Activated CD4-positive, alpha-beta T cell treated with anti-CD3 and anti-CD28 coated beads for 36 hours (primary cell): ENCODE measurements at regions of chr1 and their contacts with region 1.

Region 1: GRCh38 chr1:44786138-44786840 is 1.7 kb downstream of the BEST4 start:
- DNase-seq: peak; percentile 85
- ATAC-seq: peak; percentile 73
- H3K4me3 Mint-ChIP-seq: peak overlapping the region; percentile 66
- H3K27ac Mint-ChIP-seq: peak overlapping the region; percentile 69
- H3K4me1 Mint-ChIP-seq: peaks cover 31% of the 10 kb centered on the region
- H3K27me3 Mint-ChIP-seq: no peaks in the 10 kb centered on the region

Region 2: DNA sequence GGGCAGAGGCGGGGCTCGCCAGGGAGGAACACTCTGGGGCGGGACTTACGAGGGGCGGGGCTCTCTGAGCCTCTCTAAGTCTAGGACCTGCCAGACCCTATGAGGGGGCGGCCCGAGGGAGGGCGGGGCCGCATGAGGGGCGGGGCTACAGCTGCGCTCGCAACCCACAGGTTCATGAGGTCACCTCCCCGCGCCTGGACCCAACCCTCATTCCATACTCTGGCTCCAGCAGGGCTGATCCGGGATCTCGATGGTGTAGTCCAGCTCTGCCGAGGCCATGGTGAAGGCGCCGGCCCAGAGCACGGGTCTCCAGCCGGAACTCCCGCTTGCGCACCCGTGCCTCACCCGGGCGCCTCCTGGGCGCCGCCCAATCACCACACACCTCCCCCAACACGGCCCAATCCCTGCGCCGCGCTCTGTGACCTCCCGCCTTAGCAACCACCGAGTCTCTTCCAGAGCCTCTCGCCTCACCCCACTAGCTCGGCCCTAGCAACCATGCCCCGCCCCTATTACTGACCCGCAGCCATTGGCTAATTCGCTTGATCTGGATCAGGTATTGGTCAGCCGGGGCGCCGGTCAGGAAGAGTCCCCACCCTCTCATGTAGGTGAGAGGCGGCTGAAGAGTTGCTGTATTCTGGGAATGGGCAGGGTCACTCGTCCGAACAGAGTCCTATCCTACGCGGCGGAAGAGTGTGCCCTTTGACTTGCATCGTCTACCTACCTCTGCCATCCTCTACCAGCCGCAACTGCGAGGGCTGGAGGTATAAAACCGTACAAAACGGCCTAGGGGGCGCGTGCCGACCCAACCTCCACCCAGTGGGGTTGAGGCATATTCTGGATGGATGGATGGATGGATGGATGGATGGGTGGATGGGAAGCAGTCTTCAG is 111.9 kb before region 1 on chr1 and contains the starts of genes ARMH1 and TMEM53:
- CTCF ChIA-PET with region 1: no interaction called
- POLR2A ChIA-PET with region 1: no interaction called
- intact Hi-C with region 1: no loop called
- DNase-seq: peak; percentile 99
- ATAC-seq: peak; percentile 97
- H3K4me3 Mint-ChIP-seq: peak within 1 kb of the TSS; percentile 78
- H3K27ac Mint-ChIP-seq: peak within 1 kb of the TSS; percentile 84
- H3K4me1 Mint-ChIP-seq: peaks cover 24% of the 10 kb centered on the region
- H3K27me3 Mint-ChIP-seq: no peaks in the 10 kb centered on the region
- total RNA-seq, gene ARMH1: 67.3 to 75.1 TPM
- total RNA-seq, gene TMEM53: 4.3 to 5.5 TPM

Region 3: GRCh38 chr1:44819608-44820327 is 33.5 kb after region 1 on chr1:
- CTCF ChIA-PET with region 1: interaction called, 6 read pairs
- POLR2A ChIA-PET with region 1: interaction called, 29 read pairs
- intact Hi-C with region 1: loop called (anchors 1 kb)
- DNase-seq: peak; percentile 88
- ATAC-seq: peak; percentile 88
- H3K4me3 Mint-ChIP-seq: peak overlapping the region; percentile 85
- H3K27ac Mint-ChIP-seq: peak overlapping the region; percentile 100
- H3K4me1 Mint-ChIP-seq: peaks cover 37% of the 10 kb centered on the region
- H3K27me3 Mint-ChIP-seq: no peaks in the 10 kb centered on the region

Region 4: DNA sequence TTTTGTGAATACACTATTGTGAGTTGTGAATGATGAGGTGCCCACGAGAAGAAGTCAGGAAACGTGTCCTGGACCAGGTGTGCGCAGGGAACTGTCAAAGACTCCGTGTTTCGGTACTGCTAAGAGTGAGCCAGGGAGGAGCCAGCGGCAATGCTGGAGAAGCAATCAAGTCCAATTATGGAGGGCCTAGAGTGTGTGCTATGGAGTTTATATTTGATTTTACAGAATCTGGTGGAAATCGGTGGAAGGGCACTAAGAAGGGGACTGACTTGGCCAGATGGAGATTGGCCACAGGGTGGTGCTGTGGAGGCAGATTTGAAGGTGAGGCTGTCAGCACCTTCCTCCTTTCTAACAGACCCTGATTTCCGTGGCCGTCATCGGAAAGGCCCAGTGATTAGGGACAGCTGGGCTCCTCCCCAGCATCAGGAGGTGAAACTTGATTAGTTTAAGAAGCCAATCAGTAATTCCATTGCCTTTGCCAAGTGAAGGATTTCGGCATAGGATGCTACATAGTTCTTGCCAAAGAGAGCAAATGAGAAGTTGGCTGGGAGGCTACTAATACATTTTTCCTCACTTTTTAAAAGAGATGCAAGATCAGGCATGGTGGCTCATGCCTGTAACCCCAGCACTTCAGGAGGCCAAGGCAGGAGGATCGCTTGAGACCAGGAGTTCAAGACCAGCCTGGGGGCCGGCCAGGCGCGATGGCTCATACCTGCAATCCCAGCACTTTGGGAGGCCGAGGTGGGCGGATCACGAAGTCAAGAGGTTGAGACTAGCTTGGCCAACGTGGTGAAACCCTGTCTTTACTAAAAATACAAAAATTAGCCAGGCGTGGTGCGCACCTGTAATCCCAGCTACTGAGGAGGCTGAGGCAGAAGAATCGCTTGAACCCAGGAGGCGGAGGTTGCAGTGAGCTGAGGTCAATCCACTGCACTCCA is 49.7 kb after region 1 on chr1:
- CTCF ChIA-PET with region 1: interaction called, 4 read pairs
- POLR2A ChIA-PET with region 1: no interaction called
- intact Hi-C with region 1: loop called in 1 of 2 experiments (anchors 1 kb)
- DNase-seq: peak; percentile 96
- ATAC-seq: peak; percentile 99
- H3K4me3 Mint-ChIP-seq: no peak overlapping the region
- H3K27ac Mint-ChIP-seq: no peak overlapping the region
- H3K4me1 Mint-ChIP-seq: peaks cover 3% of the 10 kb centered on the region
- H3K27me3 Mint-ChIP-seq: peaks cover 5% of the 10 kb centered on the region